HEK293 (cell line): ENCODE measurements at regions of chr17 and their contacts with region 1.

Region 1: DNA sequence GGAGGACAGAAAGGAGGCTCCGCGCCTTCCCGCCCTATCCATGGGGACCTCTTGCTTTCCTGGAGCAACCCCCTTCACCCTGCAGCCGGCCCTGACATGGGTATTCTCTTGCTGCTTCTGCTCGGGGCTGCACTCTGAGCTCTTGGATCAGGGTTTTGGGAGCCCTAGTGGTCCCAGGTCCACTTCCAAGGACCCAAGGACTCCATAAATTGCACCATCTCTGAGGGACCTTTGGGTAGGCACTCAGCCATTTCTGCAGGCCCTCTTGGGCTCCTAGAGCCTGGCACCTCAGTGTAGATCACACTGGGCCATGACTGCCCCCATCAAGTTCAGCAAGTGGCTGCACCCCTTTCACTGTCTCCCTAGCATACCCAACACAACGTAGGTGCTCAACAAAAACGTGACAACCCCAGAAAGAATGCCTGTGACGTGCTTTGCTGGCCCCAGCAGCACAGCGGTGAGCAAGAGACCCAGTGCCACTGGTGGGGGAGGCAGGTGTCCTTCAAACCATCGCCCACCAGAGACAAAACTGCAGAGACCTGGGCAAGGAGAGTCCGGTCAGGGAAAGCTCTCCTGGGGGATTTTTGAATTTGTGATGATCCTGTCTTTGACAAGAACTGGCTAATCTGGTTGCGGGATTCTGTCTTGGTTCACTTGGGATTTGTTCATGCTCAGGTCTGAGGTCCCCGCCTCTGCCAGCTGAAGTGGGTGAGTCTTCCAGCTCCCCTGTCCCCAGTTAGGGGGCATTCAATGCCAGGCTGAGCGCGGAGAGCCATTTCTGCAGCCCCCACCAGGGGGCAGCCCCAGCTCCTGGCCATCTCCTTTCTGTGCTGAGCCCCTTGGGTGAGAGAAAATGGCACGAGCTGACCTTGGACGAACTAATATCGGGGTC is 2.5 kb upstream of the RAB11FIP4 start:
- H3K4me3 ChIP-seq: no peak overlapping the region
- H3K27ac ChIP-seq: no peak overlapping the region
- H3K4me1 ChIP-seq: no peaks in the 10 kb centered on the region
- CTCF ChIP-seq: peak; percentile 55

Region 2: DNA sequence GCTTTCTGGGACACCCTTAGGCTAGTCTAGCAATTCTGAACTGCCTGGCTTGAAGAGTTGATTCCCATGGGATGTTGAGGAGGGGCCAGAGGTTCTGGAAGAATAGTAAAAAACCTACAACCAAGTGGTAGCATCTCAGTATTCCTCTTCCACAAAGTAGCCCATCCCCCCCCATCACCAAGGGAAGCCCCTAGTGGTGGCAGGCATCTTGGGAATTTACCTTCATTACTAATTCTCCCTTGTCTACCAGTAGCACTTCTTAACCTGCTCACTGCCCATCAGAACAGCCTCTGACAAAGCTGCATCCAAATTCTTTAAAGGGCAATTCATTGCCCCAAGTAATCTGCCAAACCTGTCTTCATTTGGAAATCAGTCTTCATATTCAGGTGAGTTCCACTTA is 10.4 kb before region 1 on chr17:
- CTCF ChIA-PET with region 1: interaction called, 27 read pairs
- POLR2A ChIA-PET with region 1: no interaction called
- H3K4me3 ChIP-seq: no peak overlapping the region
- H3K27ac ChIP-seq: no peak overlapping the region
- H3K4me1 ChIP-seq: no peaks in the 10 kb centered on the region
- CTCF ChIP-seq: no peak

Region 3: GRCh38 chr17:31517524-31517923 is 128.5 kb after region 1 on chr17:
- CTCF ChIA-PET with region 1: interaction called, 43 read pairs
- POLR2A ChIA-PET with region 1: no interaction called
- H3K4me3 ChIP-seq: no peak overlapping the region
- H3K27ac ChIP-seq: no peak overlapping the region
- H3K4me1 ChIP-seq: peaks cover 2% of the 10 kb centered on the region; the same call in 1 of the 2 replicates
- CTCF ChIP-seq: no peak

Region 4: GRCh38 chr17:31524926-31525800 is 136.1 kb after region 1 on chr17:
- CTCF ChIA-PET with region 1: interaction called, 43 read pairs
- POLR2A ChIA-PET with region 1: no interaction called
- H3K4me3 ChIP-seq: no peak overlapping the region
- H3K27ac ChIP-seq: no peak overlapping the region
- H3K4me1 ChIP-seq: no peaks in the 10 kb centered on the region; the same call in 1 of the 2 replicates
- CTCF ChIP-seq: peak; percentile 80